Activated T-helper 2 cell treated with anti-CD3 and anti-CD28 coated beads, Interferon-gamma antibody, Interleukin-2, Interleukin-4, amounts not matched to agents 10 μg/mL and 5 μg/mL and 100 μg/mL, durations not matched to agents 14 hours and 24 hours and 36 hours (primary cell): ENCODE measurements at regions of chr7 and their contacts with region 1.

Region 1: DNA sequence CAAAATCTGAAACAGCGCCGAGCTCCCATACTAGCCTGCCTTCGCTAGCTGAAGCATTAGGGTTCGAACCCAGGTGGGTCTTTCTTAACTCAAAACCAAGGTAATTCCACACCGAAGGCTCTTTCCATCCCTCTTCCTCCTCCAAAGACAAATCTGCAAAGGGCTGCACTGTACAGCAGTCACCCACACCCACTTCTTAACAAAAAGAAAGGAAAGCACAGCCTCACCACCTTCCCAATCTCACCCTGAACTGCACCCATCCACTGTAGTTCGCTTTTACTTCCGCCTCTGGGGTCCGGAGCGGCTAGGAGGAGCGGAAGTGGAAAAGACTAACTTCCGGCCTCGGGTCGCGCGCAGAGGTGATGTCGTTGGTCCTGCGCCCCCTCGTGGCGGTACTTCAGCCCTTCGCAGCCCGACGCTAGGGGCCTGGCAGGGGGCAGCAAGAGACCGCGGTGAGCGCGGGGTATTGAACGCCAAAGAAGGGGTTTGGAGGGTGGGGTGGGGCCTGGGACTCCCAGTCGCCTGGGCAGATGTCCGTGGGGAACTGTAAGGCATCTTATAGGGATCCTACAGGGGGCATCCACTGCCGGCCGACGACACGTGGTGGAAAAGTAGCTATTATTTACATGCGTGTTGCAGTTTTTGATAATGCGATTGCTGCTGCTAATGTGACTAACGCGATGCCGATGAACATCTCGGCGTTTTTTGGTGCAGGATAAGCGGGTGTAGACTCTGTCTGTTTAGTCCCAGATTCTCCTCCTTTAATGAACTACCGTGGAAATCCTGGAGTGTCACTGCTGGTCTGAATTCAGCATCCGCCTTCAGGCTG is at the start of gene MTERF1:
- DNase-seq: peak; percentile 88
- H3K4me3 Mint-ChIP-seq: peak within 1 kb of the TSS; percentile 95
- H3K27ac Mint-ChIP-seq: peak within 1 kb of the TSS; percentile 93
- H3K4me1 Mint-ChIP-seq: peaks cover 32% of the 10 kb centered on the region
- H3K27me3 Mint-ChIP-seq: no peaks in the 10 kb centered on the region
- total RNA-seq, gene MTERF1: 16.2 and 19.9 TPM in 2 replicates

Region 2: GRCh38 chr7:91835846-91836368 is 44.7 kb before region 1 on chr7:
- intact Hi-C with region 1: no loop called
- DNase-seq: no peak
- H3K4me3 Mint-ChIP-seq: no peak overlapping the region
- H3K27ac Mint-ChIP-seq: no peak overlapping the region
- H3K4me1 Mint-ChIP-seq: no peaks in the 10 kb centered on the region
- H3K27me3 Mint-ChIP-seq: no peaks in the 10 kb centered on the region

Region 3: DNA sequence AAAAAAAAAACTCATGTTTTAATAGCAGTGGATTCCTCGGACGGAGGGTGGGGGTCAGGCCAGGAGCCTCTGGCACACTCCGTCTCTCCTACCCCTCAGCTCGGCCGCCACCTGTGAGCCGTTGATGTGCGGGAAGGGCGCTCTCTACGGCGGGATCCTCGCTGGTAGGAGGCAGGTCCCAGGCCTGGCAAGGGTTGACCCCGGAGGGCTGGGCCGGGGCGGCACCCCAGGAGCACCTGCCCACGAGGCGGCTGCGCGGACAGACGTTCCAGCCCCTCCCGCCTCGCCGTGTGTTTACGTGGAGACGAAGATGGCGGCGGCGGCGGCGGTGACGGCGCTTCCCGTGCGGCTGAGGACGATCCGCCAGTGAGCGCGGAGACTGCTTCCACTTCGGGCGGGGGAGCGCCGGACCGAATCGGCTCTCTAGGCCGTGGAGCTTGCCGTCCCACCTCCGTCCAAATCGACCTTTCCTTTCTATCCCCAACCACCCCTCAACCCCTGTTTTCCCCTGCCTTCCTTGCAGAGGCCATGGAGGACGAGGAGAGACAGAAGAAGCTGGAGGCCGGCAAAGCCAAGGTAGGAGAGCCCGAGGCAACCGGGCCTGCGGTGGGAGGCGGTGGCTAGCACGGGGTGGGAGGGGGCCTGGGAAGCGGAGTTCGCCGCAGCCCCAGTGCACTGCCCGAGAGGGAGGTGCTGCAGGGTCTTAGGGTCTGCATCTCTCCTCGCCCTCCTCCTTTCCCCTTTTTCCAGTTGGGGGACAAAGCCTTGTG is 60.1 kb after region 1 on chr7 and contains the start of gene AKAP9:
- intact Hi-C with region 1: loop called (anchors 1 kb)
- DNase-seq: peak; percentile 87
- H3K4me3 Mint-ChIP-seq: peak within 1 kb of the TSS; percentile 88
- H3K27ac Mint-ChIP-seq: peak within 1 kb of the TSS; percentile 93
- H3K4me1 Mint-ChIP-seq: peaks cover 28% of the 10 kb centered on the region
- H3K27me3 Mint-ChIP-seq: peaks cover 6% of the 10 kb centered on the region
- total RNA-seq, gene AKAP9: 36.2 and 38.3 TPM in 2 replicates